ENCODE measurements at regions of chr2 and their contacts with region 1.

Region 1: GRCh38 chr2:127415593-127416505 is 2.4 kb upstream of the PROC start:
- DNase-seq: peak; percentile 76 to 87
- ATAC-seq: peak; percentile 54
- H3K4me3 ChIP-seq: no peak overlapping the region
- H3K27ac ChIP-seq: no peak overlapping the region
- H3K4me1 ChIP-seq: peaks cover 2 to 3% of the 10 kb centered on the region in 2 donors
- H3K27me3 ChIP-seq: no peaks in the 10 kb centered on the region

Region 2: GRCh38 chr2:127365211-127365643 is 50.6 kb before region 1 on chr2:
- intact Hi-C with region 1: loop called (anchors 5 to 10 kb)
- DNase-seq: no peak
- ATAC-seq: no peak
- H3K4me3 ChIP-seq: no peak overlapping the region
- H3K27ac ChIP-seq: no peak overlapping the region
- H3K4me1 ChIP-seq: peaks cover 2% of the 10 kb centered on the region in 2 donors
- H3K27me3 ChIP-seq: no peaks in the 10 kb centered on the region

Region 3: DNA sequence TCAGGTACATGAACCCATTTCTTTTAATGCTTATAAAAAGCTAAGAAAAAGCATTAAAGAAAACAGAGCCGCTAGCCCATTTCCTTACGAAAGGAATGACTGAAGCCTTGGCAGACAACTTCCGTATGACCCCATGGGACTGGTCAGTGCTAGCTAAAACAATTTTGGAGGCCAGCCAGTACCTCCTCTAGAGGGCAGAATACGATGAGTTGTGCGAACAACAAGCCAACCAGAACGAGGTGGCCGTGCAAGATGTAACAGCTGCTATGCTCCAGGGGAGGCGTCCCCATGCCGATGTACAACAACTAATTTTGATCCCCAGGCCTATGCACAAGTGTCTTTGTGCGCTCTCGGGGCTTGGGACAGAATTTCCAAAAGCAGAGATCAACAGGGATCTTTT is 44.8 kb before region 1 on chr2:
- intact Hi-C with region 1: loop called (anchors 5 to 10 kb)
- DNase-seq: peak; percentile 81 to 83
- ATAC-seq: peak; percentile 82
- H3K4me3 ChIP-seq: peak overlapping the region in 1 of 2 donors; percentile 11
- H3K27ac ChIP-seq: peak overlapping the region in 1 of 2 donors; percentile 75
- H3K4me1 ChIP-seq: no peaks in the 10 kb centered on the region
- H3K27me3 ChIP-seq: no peaks in the 10 kb centered on the region

Region 4: GRCh38 chr2:127379712-127380355 is 36.0 kb before region 1 on chr2:
- intact Hi-C with region 1: loop called in 1 of 2 experiments (anchors 5 kb)
- DNase-seq: no peak
- ATAC-seq: no peak
- H3K4me3 ChIP-seq: no peak overlapping the region
- H3K27ac ChIP-seq: no peak overlapping the region
- H3K4me1 ChIP-seq: no peaks in the 10 kb centered on the region
- H3K27me3 ChIP-seq: no peaks in the 10 kb centered on the region

Measured in aorta (tissue), 5 donors.